GM12878 (cell line): ENCODE measurements at regions of chr1 and their contacts with region 1.

Region 1: DNA sequence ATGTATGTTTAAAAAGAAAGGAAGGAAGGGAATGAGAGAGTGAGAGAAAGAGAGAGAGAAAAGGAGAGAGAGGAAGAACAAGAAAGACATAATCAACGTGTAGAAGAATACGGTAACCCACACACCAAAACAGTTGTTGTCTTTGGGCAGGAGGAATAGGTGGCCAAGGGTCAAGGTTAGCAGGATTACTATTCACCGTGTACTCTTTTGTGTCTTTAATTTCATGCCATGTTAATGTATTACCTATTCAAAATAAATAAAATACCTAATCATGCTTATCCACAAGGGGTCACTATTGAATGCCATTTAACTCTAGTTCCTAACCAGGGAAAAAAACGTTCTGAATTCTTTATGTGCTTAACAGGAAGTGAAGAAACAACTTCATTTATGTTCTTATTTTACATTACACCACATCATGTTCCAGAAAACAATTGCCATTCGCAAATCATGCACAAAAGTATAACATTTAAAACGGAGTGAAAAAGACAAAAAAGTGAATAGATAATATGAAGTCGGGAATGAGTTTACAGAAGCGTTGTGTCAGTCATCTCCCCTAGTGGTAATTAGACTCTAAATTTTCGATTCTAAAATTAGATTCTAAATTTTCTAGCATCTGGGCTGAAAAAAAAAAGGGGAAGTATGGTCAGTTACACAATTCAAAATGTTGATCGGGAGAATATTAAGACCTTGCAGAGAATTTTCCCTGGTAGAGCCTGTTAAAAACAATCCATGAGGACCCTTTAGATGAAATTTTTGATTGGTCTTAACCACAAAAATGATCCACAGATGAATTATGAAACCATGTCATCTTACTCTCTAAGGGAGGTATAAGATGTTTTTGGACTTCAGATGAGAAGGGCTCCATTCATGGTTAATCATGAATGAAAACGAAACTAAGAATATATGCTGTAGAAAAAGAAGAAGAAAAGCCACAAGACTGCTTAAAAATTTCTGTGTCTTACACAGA is 700 bp upstream of the KMO start:
- DNase-seq: peak; percentile 66
- ATAC-seq: peak; percentile 89
- H3K4me3 ChIP-seq: peak overlapping the region; percentile 67
- H3K27ac ChIP-seq: peak overlapping the region; percentile 89
- H3K4me1 ChIP-seq: peaks cover 8% of the 10 kb centered on the region; the same call in 1 of the 2 replicates
- H3K27me3 ChIP-seq: no peaks in the 10 kb centered on the region
- CTCF ChIP-seq: peak; percentile 16 to 64 (median 53); a peak in 4 of 6 replicates
- EP300 ChIP-seq: peak; percentile 4 to 38; a peak in 2 of 4 replicates
- POLR2A ChIP-seq: no peak
- RAD21 ChIP-seq: peak; percentile 77

Region 2: DNA sequence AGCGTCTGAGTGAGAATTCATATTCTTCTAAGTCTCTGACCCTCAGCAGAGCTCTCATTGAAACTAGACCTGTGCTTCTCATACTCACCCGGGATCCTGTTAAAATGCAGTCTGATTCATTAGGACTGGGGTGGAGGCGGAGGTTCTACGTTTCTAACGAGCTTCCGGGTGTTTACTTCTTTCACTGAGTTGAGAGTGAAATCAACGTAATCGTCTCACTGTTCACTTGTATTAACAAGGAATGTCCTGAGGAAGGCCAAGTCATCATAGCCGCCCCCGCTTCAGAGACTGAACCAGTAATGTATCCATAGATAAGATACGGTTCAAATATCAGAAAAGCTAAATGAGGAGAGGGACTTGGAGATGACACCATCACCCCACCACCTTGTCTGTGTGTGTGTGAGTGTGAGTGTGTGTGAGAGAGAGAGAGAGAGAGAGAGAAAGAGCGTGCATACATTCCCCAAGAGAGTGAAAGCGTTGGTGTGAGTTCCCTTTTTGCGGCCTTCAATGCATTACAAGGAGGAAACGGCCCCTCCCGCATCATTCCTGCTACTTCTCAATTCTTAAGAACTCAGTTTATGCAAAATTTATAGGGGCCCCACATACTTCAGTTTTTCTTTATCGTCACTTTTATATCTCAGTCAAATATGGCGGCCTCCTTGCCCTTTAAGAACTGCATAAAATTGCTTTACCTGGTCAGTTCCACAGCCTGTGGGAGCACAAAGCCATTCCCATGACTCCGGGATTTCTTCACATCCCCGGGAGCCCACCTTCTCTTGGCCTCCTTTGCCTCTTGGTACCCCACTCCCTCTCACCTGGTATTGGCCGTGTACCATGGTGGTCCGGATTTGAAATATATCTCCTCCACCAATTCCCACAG is 20.5 kb after region 1 on chr1:
- CTCF ChIA-PET with region 1: interaction called, 3 read pairs
- POLR2A ChIA-PET with region 1: interaction called, 3 read pairs
- RAD21 ChIA-PET with region 1: interaction called, 3 read pairs
- SMC1A ChIA-PET with region 1: interaction called, 10 read pairs
- in situ Hi-C with region 1: no loop called
- intact Hi-C with region 1: loop called (anchors 2 kb)
- DNase-seq: peak; percentile 46
- ATAC-seq: peak; percentile 71
- H3K4me3 ChIP-seq: peak overlapping the region; percentile 54
- H3K27ac ChIP-seq: peak overlapping the region; percentile 84
- H3K4me1 ChIP-seq: peaks cover 6% of the 10 kb centered on the region
- H3K27me3 ChIP-seq: no peaks in the 10 kb centered on the region
- CTCF ChIP-seq: no peak
- EP300 ChIP-seq: peak; percentile 68 to 79; a peak in 3 of 4 replicates
- POLR2A ChIP-seq: peak; percentile 70
- RAD21 ChIP-seq: no peak

Region 3: GRCh38 chr1:241847796-241848685 is 316.6 kb after region 1 on chr1 and contains the start of gene EXO1:
- CTCF ChIA-PET with region 1: no interaction called
- POLR2A ChIA-PET with region 1: interaction called, 3 read pairs
- RAD21 ChIA-PET with region 1: no interaction called
- SMC1A ChIA-PET with region 1: no interaction called
- in situ Hi-C with region 1: loop called (anchors 5 kb)
- intact Hi-C with region 1: loop called (anchors 5 kb)
- DNase-seq: peak; percentile 61
- ATAC-seq: peak; percentile 96
- H3K4me3 ChIP-seq: peak within 1 kb of the TSS; percentile 89
- H3K27ac ChIP-seq: peak within 1 kb of the TSS; percentile 92
- H3K4me1 ChIP-seq: no peaks in the 10 kb centered on the region; the same call in 1 of the 2 replicates
- H3K27me3 ChIP-seq: no peaks in the 10 kb centered on the region
- CTCF ChIP-seq: peak; percentile 55 to 65 (median 57)
- EP300 ChIP-seq: no peak
- POLR2A ChIP-seq: peak; percentile 88
- RAD21 ChIP-seq: peak; percentile 48
- polyA plus RNA-seq, gene EXO1: 8.7 to 17.6 TPM

Region 4: DNA sequence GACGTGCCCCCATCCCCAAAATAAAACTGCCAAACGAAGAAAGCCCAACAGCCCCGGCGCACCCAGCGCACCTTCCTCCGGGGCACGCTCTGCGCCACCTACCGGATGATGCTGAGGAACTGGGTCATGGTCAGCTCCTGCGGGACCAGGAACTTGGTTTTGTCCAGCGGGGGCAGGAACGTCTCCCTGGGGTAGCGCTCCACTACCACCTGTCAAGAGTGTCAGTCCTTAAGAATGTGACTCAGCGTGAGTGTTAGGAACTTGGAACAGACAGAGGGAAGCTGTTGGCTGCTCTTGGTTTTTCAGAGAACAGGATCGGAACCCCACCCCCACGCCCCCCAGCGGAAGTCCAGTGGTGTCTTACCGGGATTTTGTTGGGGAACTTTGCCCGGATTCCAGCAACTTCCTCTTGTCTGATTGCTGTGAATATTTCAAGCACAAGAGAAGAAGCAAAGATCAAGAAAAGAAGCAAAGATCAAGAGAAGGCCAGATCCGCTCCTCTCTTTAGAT is 467.0 kb after region 1 on chr1:
- CTCF ChIA-PET with region 1: no interaction called
- POLR2A ChIA-PET with region 1: no interaction called
- RAD21 ChIA-PET with region 1: no interaction called
- SMC1A ChIA-PET with region 1: no interaction called
- in situ Hi-C with region 1: loop called (anchors 10 kb)
- intact Hi-C with region 1: loop called (anchors 5 kb)
- DNase-seq: no peak
- ATAC-seq: peak; percentile 91
- H3K4me3 ChIP-seq: peak overlapping the region; percentile 47; the same call in 1 of the 2 replicates
- H3K27ac ChIP-seq: no peak overlapping the region
- H3K4me1 ChIP-seq: no peaks in the 10 kb centered on the region; the same call in 1 of the 2 replicates
- H3K27me3 ChIP-seq: no peaks in the 10 kb centered on the region; a peak in 1 of 4 replicates
- CTCF ChIP-seq: peak; percentile 37 to 88 (median 70)
- EP300 ChIP-seq: no peak
- POLR2A ChIP-seq: no peak
- RAD21 ChIP-seq: peak; percentile 38